ENCODE measurements at regions of chr7 and their contacts with region 1.

Region 1: GRCh38 chr7:27160546-27161213 is 4.2 kb upstream of the HOXA7 start:
- DNase-seq: no peak
- H3K27ac ChIP-seq: peak overlapping the region; percentile 94
- CTCF ChIP-seq: peak; percentile 99

Region 2: DNA sequence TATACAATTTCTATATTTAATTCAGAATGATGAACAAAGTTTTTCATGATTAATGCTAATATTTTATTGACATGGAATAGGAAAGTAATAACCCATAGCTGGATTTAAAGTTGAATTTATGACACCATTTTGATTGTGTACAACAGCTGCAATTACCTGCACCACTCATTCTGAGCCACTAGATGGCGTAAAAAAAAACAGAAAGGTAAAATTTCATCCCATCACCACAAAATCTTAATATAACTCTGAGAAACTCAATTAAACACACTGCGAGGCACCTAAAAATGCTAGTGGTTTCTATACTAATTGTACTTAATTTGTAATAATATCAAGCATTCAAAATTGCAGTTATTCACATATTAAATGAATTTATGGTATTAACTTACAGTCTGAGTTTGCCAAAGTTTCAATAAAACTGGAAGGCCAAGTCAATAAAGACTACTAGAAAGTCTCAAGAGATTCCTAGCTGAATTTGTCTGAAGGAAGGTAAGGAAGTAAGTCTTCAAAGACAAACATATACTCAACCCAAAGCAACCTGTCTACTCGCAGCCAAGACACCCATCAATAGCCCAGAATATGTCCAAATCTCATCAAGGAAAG is 478.8 kb before region 1 on chr7:
- CTCF ChIA-PET with region 1: interaction called, 12 read pairs
- POLR2A ChIA-PET with region 1: no interaction called
- DNase-seq: peak; percentile 34
- H3K27ac ChIP-seq: no peak overlapping the region
- CTCF ChIP-seq: peak; percentile 93

Measured in RWPE1 (cell line).